MCF 10A (cell line): ENCODE measurements at regions of chr2 and their contacts with region 1.

Region 1: DNA sequence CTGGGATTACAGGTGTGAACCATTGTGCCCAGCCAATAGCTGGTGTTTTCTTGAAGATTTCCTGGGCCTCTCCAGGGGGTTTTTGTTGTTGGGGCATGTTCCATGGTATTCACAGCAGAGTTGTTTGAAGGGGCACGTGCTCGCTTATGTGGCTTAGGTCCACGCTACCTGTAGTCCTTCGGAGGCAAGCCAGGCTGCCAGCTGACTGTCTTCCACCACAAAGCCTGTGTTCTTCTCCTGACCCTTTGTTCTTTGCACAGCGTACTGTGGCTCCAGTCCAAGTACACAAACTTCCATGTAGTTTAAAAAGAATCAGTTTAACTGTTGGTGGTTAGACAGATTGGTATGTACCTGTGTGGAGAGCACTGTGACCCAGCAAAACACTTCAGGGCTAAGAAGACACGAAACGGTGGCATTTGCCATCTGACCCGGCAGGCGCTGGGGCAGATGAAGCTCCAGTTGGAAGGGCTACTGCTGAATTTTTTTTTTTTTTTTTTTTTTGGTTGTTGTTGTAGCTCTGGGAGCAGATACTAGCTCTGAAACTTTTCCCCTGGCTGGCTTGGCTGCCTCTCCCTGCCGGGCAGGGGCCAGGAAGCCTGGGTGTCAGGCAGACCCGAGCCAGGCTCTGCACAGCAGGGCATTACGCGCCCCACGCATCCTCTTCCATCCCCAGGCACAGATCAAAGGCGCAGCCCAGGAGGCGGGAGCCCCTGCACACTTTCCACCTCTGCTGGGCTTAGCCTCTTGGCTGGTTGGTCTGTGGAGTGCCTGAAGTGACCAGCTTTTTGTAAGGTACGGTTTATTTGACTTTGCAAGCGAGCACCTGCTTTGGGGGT is 5.7 kb downstream of the GREB1 start:
- DNase-seq: peak; percentile 56
- H3K4me3 Mint-ChIP-seq: peak overlapping the region; percentile 69
- H3K27ac Mint-ChIP-seq: peak overlapping the region; percentile 3
- H3K4me1 Mint-ChIP-seq: peaks cover 42% of the 10 kb centered on the region
- H3K27me3 Mint-ChIP-seq: peaks cover 10% of the 10 kb centered on the region
- CTCF ChIP-seq: no peak

Region 2: DNA sequence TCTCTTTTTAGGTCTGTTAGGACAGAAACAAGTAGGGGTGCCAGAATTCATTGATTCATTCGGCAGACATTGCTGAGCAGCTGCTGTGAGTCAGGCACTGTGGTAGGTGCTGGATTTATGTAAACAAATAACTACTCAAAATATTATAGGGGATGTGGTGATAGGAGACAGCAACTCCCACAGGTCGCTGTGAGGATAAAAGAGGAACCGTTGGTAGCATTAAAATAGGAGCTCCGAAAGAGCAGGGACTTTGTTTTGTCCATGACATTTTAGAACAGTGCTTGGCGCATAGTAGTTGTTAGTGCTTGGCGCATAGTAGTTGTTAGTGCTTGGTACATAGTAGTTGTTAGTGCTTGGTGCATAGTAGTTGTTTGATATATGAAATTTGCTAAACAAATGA is 788.9 kb before region 1 on chr2:
- CTCF ChIA-PET with region 1: no interaction called
- POLR2A ChIA-PET with region 1: no interaction called
- intact Hi-C with region 1: no loop called
- DNase-seq: no peak
- H3K4me3 Mint-ChIP-seq: no peak overlapping the region
- H3K27ac Mint-ChIP-seq: no peak overlapping the region
- H3K4me1 Mint-ChIP-seq: no peaks in the 10 kb centered on the region
- H3K27me3 Mint-ChIP-seq: no peaks in the 10 kb centered on the region
- CTCF ChIP-seq: no peak

Region 3: GRCh38 chr2:11305958-11306357 is 233.6 kb before region 1 on chr2:
- CTCF ChIA-PET with region 1: no interaction called
- POLR2A ChIA-PET with region 1: no interaction called
- intact Hi-C with region 1: no loop called
- DNase-seq: peak; percentile 46
- H3K4me3 Mint-ChIP-seq: no peak overlapping the region
- H3K27ac Mint-ChIP-seq: no peak overlapping the region
- H3K4me1 Mint-ChIP-seq: peaks cover 17% of the 10 kb centered on the region
- H3K27me3 Mint-ChIP-seq: no peaks in the 10 kb centered on the region
- CTCF ChIP-seq: no peak

Region 4: DNA sequence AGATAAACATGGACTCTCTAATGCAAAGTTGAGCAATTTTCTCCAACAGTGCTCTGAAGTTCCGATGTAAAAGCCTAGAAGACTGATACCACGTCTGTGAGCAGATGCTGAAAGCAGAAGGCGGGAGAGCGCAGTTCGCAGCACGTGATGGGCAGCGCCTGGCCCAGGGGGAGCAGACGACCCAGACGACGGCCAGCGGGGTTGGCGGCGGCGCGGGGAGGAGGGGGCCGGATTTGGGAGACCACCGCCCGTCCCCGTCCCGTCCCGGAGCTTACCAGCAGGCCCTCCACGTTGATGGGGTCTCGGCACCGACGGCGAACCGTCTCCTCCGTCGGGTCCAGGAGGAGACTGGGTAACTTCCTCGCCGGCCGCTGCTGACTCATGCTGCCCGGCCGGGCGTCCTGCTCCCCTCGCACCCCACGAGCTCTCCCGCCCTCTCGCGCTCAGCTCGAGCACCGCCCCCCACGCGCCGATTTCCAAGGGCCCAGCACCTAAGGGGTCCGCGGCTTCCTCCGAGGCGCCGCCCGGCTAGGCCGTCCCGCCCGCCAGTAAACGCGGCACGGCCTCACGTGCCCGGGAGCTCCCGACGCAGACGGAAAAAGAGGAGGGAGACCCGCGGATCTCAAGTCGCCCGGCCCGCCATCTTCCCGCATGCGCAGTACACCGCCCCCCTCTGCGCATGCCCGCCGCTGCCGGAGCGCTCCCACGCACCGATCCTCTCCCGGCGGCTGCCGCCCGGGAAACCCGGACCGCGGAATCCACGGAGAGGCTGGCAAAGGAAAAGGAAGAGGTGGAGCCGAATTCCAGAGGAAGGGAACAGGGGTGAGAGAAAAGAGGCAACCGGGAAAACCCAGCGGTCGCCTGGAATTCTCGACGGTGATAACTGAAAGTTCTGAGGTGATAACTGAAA is 73.8 kb before region 1 on chr2 and contains the start of gene E2F6:
- CTCF ChIA-PET with region 1: interaction called, 4 read pairs
- POLR2A ChIA-PET with region 1: interaction called, 12 read pairs
- intact Hi-C with region 1: no loop called
- DNase-seq: peak; percentile 94
- H3K4me3 Mint-ChIP-seq: peak within 1 kb of the TSS; percentile 93
- H3K27ac Mint-ChIP-seq: peak within 1 kb of the TSS; percentile 87
- H3K4me1 Mint-ChIP-seq: peaks cover 15% of the 10 kb centered on the region
- H3K27me3 Mint-ChIP-seq: no peaks in the 10 kb centered on the region
- CTCF ChIP-seq: no peak
- total RNA-seq, gene E2F6: 16.1 and 16.6 TPM in 2 replicates

Region 5: GRCh38 chr2:11498543-11499080 is 40.9 kb before region 1 on chr2:
- CTCF ChIA-PET with region 1: interaction called, 4 read pairs
- POLR2A ChIA-PET with region 1: interaction called, 11 read pairs
- intact Hi-C with region 1: loop called (anchors 5 kb)
- DNase-seq: peak; percentile 32
- H3K4me3 Mint-ChIP-seq: no peak overlapping the region
- H3K27ac Mint-ChIP-seq: peak overlapping the region; percentile 9
- H3K4me1 Mint-ChIP-seq: peaks cover 11% of the 10 kb centered on the region
- H3K27me3 Mint-ChIP-seq: no peaks in the 10 kb centered on the region
- CTCF ChIP-seq: no peak